ENCODE measurements at regions of chr7 and their contacts with region 1.

Region 1: DNA sequence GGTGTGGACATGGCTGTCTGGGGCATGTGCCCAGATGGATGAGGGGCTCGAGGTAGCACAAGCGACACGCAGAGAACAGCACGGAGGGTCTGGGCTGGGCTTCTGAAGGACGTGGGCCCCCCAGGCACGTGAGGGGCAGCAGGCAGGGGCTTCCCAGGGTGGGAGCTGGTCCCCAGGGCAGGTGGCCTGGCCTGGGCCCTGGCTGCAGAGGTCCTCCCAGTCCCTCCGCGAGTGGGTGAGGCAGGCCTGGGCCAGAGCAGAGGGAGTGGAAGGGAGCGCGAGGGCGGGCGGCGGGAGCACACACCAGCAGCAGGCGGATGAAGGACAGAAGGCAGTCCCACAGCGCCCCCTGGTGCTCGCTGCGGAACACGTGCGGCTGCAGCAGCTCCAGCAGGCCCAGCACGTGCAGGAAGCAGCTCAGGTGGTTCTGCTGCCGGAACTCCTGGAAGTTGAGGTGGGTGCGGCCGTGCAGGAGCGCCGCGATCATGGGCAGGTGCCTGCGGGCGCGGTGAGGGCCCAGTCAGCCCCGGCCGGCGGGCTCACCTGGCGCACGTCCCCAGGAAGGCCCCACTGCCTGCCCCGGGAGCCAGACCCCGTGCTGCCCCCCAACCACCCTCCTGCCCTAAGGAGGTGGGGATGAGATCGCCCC is 14.7 kb upstream of the MICALL2 start:
- DNase-seq: peak; percentile 93 to 94
- H3K4me3 ChIP-seq: no peak overlapping the region
- H3K27ac ChIP-seq: no peak overlapping the region
- H3K4me1 ChIP-seq: no peaks in the 10 kb centered on the region; a peak in 1 of 7 replicates
- H3K27me3 ChIP-seq: no peaks in the 10 kb centered on the region
- CTCF ChIP-seq: peak in 2 of 3 experiments; percentile 85 to 99; a peak in 3 of 4 replicates
- EP300 ChIP-seq: no peak
- POLR2A ChIP-seq: no peak
- RAD21 ChIP-seq: peak; percentile 82 to 85

Region 2: GRCh38 chr7:1290679-1291356 is 183.2 kb before region 1 on chr7:
- CTCF ChIA-PET with region 1: no interaction called
- POLR2A ChIA-PET with region 1: no interaction called
- DNase-seq: no peak
- H3K4me3 ChIP-seq: peak overlapping the region in 3 of 4 experiments; percentile 32 to 63 (median 40); a peak in 3 of 8 replicates
- H3K27ac ChIP-seq: no peak overlapping the region
- H3K4me1 ChIP-seq: peaks cover 0 to 6% (median 0%) of the 10 kb centered on the region in 4 experiments; a peak in 2 of 7 replicates
- H3K27me3 ChIP-seq: peaks cover 0 to 28% (median 21%) of the 10 kb centered on the region in 4 experiments; a peak in 6 of 7 replicates
- CTCF ChIP-seq: peak in 1 of 3 experiments; percentile 19; a peak in 1 of 4 replicates
- EP300 ChIP-seq: no peak
- POLR2A ChIP-seq: no peak
- RAD21 ChIP-seq: peak; percentile 15 to 31; a peak in 1 of 4 replicates

Region 3: DNA sequence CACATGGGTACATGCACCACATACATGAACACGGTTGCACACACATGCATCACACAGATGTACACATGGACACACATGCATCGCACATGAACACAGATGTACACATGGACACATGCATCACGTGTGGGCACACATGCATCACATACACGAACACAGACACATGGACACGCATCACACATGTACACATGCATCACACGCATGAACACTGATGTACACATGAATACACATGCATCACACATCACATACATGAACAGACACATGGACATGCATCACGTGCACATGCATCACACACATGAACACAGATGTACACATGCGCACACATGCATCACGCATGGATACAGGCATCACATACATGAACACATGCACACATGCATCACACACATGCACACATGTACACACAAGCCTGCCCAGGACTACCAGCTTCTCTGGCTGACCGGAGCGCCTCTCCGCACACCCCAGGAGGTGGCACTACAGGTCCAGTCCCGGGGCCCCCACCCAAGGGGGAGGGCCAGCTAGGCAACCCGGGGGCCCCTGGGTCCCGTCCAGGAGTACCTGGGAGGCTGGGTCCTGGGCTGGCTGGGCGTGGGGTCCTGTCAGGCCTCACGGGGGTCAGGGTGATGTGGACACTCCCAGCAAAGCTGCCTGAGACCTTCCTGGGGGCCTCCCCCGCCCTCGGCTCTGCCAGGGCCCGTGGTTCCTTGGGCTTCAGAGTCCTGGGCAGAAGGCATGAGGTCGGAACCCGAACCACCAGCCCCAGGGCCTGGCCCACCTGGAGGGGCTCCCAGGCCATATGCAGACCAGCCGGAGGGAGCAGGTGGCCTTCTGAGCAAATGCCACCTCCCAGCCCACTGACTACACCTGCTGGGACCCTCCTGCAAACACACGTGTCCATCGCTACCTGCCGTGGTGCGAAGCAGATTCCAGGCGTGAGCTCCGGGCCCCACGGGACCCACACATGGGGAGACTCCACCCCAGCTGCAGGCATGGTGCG is 34.3 kb before region 1 on chr7:
- CTCF ChIA-PET with region 1: interaction called, 12 read pairs
- POLR2A ChIA-PET with region 1: no interaction called
- DNase-seq: no peak
- H3K4me3 ChIP-seq: no peak overlapping the region
- H3K27ac ChIP-seq: no peak overlapping the region
- H3K4me1 ChIP-seq: no peaks in the 10 kb centered on the region; a peak in 1 of 7 replicates
- H3K27me3 ChIP-seq: no peaks in the 10 kb centered on the region
- CTCF ChIP-seq: no peak
- EP300 ChIP-seq: no peak
- POLR2A ChIP-seq: no peak
- RAD21 ChIP-seq: peak in 1 of 2 experiments; percentile 13; a peak in 1 of 4 replicates

Region 4: GRCh38 chr7:1447551-1448244 is 26.3 kb before region 1 on chr7:
- CTCF ChIA-PET with region 1: interaction called, 24 read pairs
- POLR2A ChIA-PET with region 1: no interaction called
- DNase-seq: no peak
- H3K4me3 ChIP-seq: no peak overlapping the region
- H3K27ac ChIP-seq: no peak overlapping the region
- H3K4me1 ChIP-seq: no peaks in the 10 kb centered on the region; a peak in 1 of 7 replicates
- H3K27me3 ChIP-seq: no peaks in the 10 kb centered on the region
- CTCF ChIP-seq: no peak
- EP300 ChIP-seq: no peak
- POLR2A ChIP-seq: no peak
- RAD21 ChIP-seq: no peak

Region 5: GRCh38 chr7:1458676-1459521 is 15.1 kb before region 1 on chr7 and contains the start of gene MICALL2:
- CTCF ChIA-PET with region 1: interaction called, 11 read pairs
- POLR2A ChIA-PET with region 1: interaction called, 8 read pairs
- DNase-seq: no peak
- H3K4me3 ChIP-seq: peak within 1 kb of the TSS; percentile 68 to 77 (median 72)
- H3K27ac ChIP-seq: no peak within 1 kb of the TSS
- H3K4me1 ChIP-seq: peaks cover 0 to 24% (median 14%) of the 10 kb centered on the region in 4 experiments; a peak in 6 of 7 replicates
- H3K27me3 ChIP-seq: no peaks in the 10 kb centered on the region
- CTCF ChIP-seq: no peak
- EP300 ChIP-seq: no peak
- POLR2A ChIP-seq: peak in 1 of 2 experiments; percentile 83; a peak in 2 of 3 replicates
- RAD21 ChIP-seq: no peak
- total RNA-seq, gene MICALL2: 7.7 and 8.5 TPM in 2 replicates

Region 6: DNA sequence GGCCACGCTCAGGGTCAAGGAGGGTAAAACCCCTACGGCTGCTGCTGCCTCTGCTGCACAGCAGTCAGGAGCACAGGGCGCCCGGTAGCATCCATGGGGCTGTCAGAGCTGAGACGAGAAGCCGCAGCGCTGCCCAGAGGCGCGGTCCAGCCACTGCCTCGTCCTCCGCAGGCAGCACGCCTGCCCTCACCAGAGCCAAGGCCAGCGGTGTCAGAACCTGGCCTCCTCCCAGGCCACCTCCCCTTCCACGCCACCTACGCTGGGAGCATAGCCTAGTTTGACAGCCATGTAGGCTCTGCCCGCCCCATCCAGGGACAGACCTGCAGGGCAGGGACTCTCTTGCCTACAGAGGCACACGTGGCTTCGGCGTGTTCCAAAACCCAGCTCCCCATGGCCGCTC is 14.0 kb after region 1 on chr7:
- CTCF ChIA-PET with region 1: interaction called, 38 read pairs
- POLR2A ChIA-PET with region 1: interaction called, 43 read pairs
- DNase-seq: no peak
- H3K4me3 ChIP-seq: no peak overlapping the region
- H3K27ac ChIP-seq: no peak overlapping the region
- H3K4me1 ChIP-seq: no peaks in the 10 kb centered on the region
- H3K27me3 ChIP-seq: no peaks in the 10 kb centered on the region
- CTCF ChIP-seq: no peak
- EP300 ChIP-seq: no peak
- POLR2A ChIP-seq: no peak
- RAD21 ChIP-seq: no peak

Region 7: GRCh38 chr7:1494447-1494846 is 20.5 kb after region 1 on chr7:
- CTCF ChIA-PET with region 1: interaction called, 38 read pairs
- POLR2A ChIA-PET with region 1: interaction called, 43 read pairs
- DNase-seq: no peak
- H3K4me3 ChIP-seq: no peak overlapping the region
- H3K27ac ChIP-seq: no peak overlapping the region
- H3K4me1 ChIP-seq: no peaks in the 10 kb centered on the region
- H3K27me3 ChIP-seq: no peaks in the 10 kb centered on the region
- CTCF ChIP-seq: no peak
- EP300 ChIP-seq: no peak
- POLR2A ChIP-seq: no peak
- RAD21 ChIP-seq: no peak

Region 8: DNA sequence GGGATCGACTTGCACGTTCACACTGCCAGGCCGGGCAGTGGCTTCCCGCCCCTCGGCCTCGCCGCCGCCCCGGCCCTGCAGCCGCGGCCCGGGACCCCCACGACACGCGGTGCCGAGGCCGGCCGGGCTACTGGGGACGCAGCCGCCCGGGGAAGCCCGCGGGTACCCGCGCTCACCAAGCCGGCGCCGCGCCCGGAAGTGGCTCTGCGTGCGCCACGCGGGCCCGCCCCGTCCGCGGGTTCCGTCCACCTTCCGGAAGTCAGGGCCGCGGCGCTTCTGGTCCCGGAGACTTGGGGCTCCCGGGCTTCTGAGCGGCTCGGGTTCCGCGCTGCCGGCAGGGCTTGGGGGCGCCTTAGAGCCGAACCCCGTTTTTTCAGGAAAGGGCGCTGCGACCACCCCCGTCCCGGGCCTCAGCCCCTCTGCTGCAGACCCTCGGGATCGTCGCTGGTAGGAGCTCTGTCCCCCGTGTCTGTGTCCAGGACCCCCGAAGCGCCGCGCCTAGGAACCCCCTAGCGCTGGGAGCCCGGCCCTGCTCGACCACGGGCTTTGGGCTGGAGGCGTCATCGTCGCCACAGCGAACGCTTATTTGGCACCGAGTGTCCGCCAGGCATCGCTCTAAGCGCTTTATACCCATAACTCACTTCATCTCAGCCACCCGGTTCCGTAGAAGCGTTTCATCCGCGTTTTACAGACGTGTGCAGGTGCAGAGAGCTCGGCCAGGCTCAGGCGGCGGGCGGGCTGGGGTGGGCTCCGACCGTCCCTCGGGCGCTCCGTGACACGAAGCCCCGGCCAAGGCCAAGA is 96.0 kb after region 1 on chr7 and contains the start of gene PSMG3:
- CTCF ChIA-PET with region 1: no interaction called
- POLR2A ChIA-PET with region 1: no interaction called
- DNase-seq: peak in 1 of 2 experiments; percentile 75
- H3K4me3 ChIP-seq: peak within 1 kb of the TSS; percentile 74 to 76 (median 75)
- H3K27ac ChIP-seq: peak within 1 kb of the TSS; percentile 58; the same call in 1 of the 2 replicates
- H3K4me1 ChIP-seq: peaks cover 0 to 17% (median 10%) of the 10 kb centered on the region in 4 experiments; a peak in 5 of 7 replicates
- H3K27me3 ChIP-seq: no peaks in the 10 kb centered on the region; a peak in 2 of 7 replicates
- CTCF ChIP-seq: no peak
- EP300 ChIP-seq: no peak
- POLR2A ChIP-seq: peak in 1 of 2 experiments; percentile 59; a peak in 2 of 3 replicates
- RAD21 ChIP-seq: no peak
- total RNA-seq, gene PSMG3: 30.2 and 32.0 TPM in 2 replicates

Region 9: GRCh38 chr7:1638215-1638661 is 164.2 kb after region 1 on chr7:
- CTCF ChIA-PET with region 1: no interaction called
- POLR2A ChIA-PET with region 1: no interaction called
- DNase-seq: no peak
- H3K4me3 ChIP-seq: no peak overlapping the region
- H3K27ac ChIP-seq: no peak overlapping the region
- H3K4me1 ChIP-seq: no peaks in the 10 kb centered on the region; a peak in 1 of 7 replicates
- H3K27me3 ChIP-seq: no peaks in the 10 kb centered on the region
- CTCF ChIP-seq: no peak
- EP300 ChIP-seq: no peak
- POLR2A ChIP-seq: no peak
- RAD21 ChIP-seq: no peak